Activated CD4-positive, alpha-beta T cell treated with anti-CD3 and anti-CD28 coated beads for 36 hours (primary cell): ENCODE measurements at regions of chr16 and their contacts with region 1.

Region 1: GRCh38 chr16:1308977-1309885 is at the start of gene UBE2I:
- DNase-seq: peak; percentile 98
- ATAC-seq: peak; percentile 67
- H3K4me3 Mint-ChIP-seq: peak within 1 kb of the TSS; percentile 97
- H3K27ac Mint-ChIP-seq: peak within 1 kb of the TSS; percentile 99
- H3K4me1 Mint-ChIP-seq: peaks cover 47% of the 10 kb centered on the region
- H3K27me3 Mint-ChIP-seq: no peaks in the 10 kb centered on the region
- total RNA-seq, gene UBE2I: 251 to 358 TPM

Region 2: GRCh38 chr16:636206-637080 is 672.8 kb before region 1 on chr16 and contains the start of gene METTL26:
- CTCF ChIA-PET with region 1: no interaction called
- POLR2A ChIA-PET with region 1: no interaction called
- intact Hi-C with region 1: loop called in 1 of 2 experiments (anchors 2 kb)
- DNase-seq: peak; percentile 97
- ATAC-seq: peak; percentile 89
- H3K4me3 Mint-ChIP-seq: peak within 1 kb of the TSS; percentile 87
- H3K27ac Mint-ChIP-seq: peak within 1 kb of the TSS; percentile 91
- H3K4me1 Mint-ChIP-seq: peaks cover 13% of the 10 kb centered on the region
- H3K27me3 Mint-ChIP-seq: no peaks in the 10 kb centered on the region
- total RNA-seq, gene METTL26: 116 to 127 TPM

Region 3: GRCh38 chr16:1331712-1332617 is 22.7 kb after region 1 on chr16:
- CTCF ChIA-PET with region 1: no interaction called
- POLR2A ChIA-PET with region 1: interaction called, 3 read pairs
- intact Hi-C with region 1: loop called (anchors 1 to 2 kb)
- DNase-seq: peak; percentile 58
- ATAC-seq: peak; percentile 19
- H3K4me3 Mint-ChIP-seq: no peak overlapping the region
- H3K27ac Mint-ChIP-seq: no peak overlapping the region
- H3K4me1 Mint-ChIP-seq: peaks cover 15% of the 10 kb centered on the region
- H3K27me3 Mint-ChIP-seq: peaks cover 23% of the 10 kb centered on the region

Region 4: GRCh38 chr16:1420111-1420540 is 110.9 kb after region 1 on chr16:
- CTCF ChIA-PET with region 1: no interaction called
- POLR2A ChIA-PET with region 1: interaction called, 6 read pairs
- intact Hi-C with region 1: loop called (anchors 1 kb)
- DNase-seq: peak; percentile 32
- ATAC-seq: no peak
- H3K4me3 Mint-ChIP-seq: peak overlapping the region; percentile 84
- H3K27ac Mint-ChIP-seq: peak overlapping the region; percentile 70
- H3K4me1 Mint-ChIP-seq: peaks cover 25% of the 10 kb centered on the region
- H3K27me3 Mint-ChIP-seq: no peaks in the 10 kb centered on the region

Region 5: GRCh38 chr16:1635070-1635469 is 325.8 kb after region 1 on chr16:
- CTCF ChIA-PET with region 1: no interaction called
- POLR2A ChIA-PET with region 1: no interaction called
- intact Hi-C with region 1: no loop called
- DNase-seq: peak; percentile 43
- ATAC-seq: peak; percentile 65
- H3K4me3 Mint-ChIP-seq: no peak overlapping the region
- H3K27ac Mint-ChIP-seq: no peak overlapping the region
- H3K4me1 Mint-ChIP-seq: no peaks in the 10 kb centered on the region
- H3K27me3 Mint-ChIP-seq: no peaks in the 10 kb centered on the region

Region 6: DNA sequence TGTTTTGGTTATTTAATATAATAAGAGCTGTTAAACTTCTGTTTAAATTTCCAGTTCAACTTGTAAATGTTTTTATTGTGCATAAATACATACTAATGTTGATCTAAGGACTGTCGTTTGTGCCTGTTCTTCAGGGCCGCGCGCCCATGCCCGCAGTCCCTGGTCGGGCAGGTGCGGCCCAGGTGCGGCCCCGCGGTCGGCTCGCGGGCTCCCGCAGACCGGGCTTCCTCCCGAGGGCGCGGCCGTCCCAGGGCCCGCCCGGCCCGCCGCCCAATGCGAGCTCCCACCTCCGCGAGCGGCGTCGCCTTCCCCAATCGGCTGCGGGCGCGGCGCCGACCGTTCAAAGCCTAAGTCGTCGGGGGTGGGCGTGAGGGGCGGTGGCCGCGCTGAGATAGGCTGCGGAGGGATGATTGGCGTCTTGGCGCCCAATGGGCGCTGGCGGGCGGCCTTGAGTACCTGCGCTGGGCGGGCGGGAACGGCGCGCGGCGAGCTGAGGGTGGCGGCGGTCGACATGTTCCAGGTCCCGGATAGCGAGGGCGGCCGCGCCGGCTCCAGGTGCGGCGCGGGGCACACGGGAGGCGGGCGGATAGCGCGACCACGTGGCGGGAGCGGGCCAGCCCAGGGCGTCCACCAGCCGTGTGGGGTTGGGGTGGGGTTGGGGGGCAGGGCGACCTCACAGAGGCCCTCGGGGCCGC is 368.7 kb after region 1 on chr16 and contains the start of gene JPT2:
- CTCF ChIA-PET with region 1: no interaction called
- POLR2A ChIA-PET with region 1: interaction called, 4 read pairs
- intact Hi-C with region 1: loop called in 1 of 2 experiments (anchors 1 kb)
- DNase-seq: peak; percentile 98
- ATAC-seq: peak; percentile 99
- H3K4me3 Mint-ChIP-seq: peak within 1 kb of the TSS; percentile 94
- H3K27ac Mint-ChIP-seq: peak within 1 kb of the TSS; percentile 89
- H3K4me1 Mint-ChIP-seq: peaks cover 26% of the 10 kb centered on the region
- H3K27me3 Mint-ChIP-seq: no peaks in the 10 kb centered on the region
- total RNA-seq, gene JPT2: 77.1 to 111 TPM

Region 7: GRCh38 chr16:1964506-1965395 is 655.5 kb after region 1 on chr16 and contains the start of gene RPS2:
- CTCF ChIA-PET with region 1: no interaction called
- POLR2A ChIA-PET with region 1: interaction called, 3 read pairs
- intact Hi-C with region 1: loop called in 1 of 2 experiments (anchors 1 kb)
- DNase-seq: peak; percentile 100
- ATAC-seq: peak; percentile 81
- H3K4me3 Mint-ChIP-seq: peak within 1 kb of the TSS; percentile 96
- H3K27ac Mint-ChIP-seq: peak within 1 kb of the TSS; percentile 99
- H3K4me1 Mint-ChIP-seq: peaks cover 38% of the 10 kb centered on the region
- H3K27me3 Mint-ChIP-seq: no peaks in the 10 kb centered on the region
- total RNA-seq, gene RPS2: 5,351 to 6,287 TPM